ENCODE measurements at regions of chr16 and their contacts with region 1.

Region 1: GRCh38 chr16:56389554-56389953 is 35.8 kb downstream of the AMFR start:
- DNase-seq: no peak
- H3K4me3 ChIP-seq: no peak overlapping the region
- H3K27ac ChIP-seq: no peak overlapping the region
- H3K4me1 ChIP-seq: no peaks in the 10 kb centered on the region
- H3K27me3 ChIP-seq: no peaks in the 10 kb centered on the region
- CTCF ChIP-seq: no peak
- EP300 ChIP-seq: no peak
- POLR2A ChIP-seq: no peak
- RAD21 ChIP-seq: no peak

Region 2: DNA sequence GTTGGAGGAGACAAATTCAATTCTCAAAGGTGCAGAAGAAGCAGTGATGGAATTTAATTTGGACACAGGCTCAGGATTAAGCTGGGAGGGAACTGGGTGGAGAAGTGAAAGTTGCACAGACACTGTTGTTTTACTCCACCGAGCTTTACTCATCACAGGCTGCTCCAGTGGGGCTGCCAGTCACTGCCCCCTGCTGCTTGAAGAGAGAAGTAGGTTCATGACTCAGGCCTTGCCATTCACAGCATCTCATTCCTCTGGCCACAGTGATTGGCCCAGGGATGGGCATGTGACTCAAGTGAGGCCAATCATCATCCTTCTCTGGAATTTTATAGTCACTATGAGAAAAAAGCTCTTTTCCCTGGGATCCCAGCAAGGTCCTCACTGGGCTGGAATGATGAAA is 186.5 kb before region 1 on chr16:
- CTCF ChIA-PET with region 1: no interaction called
- POLR2A ChIA-PET with region 1: no interaction called
- DNase-seq: peak in 1 of 2 experiments; percentile 53
- H3K4me3 ChIP-seq: no peak overlapping the region
- H3K27ac ChIP-seq: no peak overlapping the region
- H3K4me1 ChIP-seq: peaks cover 0 to 4% (median 3%) of the 10 kb centered on the region in 4 experiments; a peak in 4 of 7 replicates
- H3K27me3 ChIP-seq: no peaks in the 10 kb centered on the region
- CTCF ChIP-seq: peak; percentile 44 to 49 (median 48)
- EP300 ChIP-seq: no peak
- POLR2A ChIP-seq: no peak
- RAD21 ChIP-seq: peak; percentile 49 to 64; a peak in 3 of 4 replicates

Region 3: DNA sequence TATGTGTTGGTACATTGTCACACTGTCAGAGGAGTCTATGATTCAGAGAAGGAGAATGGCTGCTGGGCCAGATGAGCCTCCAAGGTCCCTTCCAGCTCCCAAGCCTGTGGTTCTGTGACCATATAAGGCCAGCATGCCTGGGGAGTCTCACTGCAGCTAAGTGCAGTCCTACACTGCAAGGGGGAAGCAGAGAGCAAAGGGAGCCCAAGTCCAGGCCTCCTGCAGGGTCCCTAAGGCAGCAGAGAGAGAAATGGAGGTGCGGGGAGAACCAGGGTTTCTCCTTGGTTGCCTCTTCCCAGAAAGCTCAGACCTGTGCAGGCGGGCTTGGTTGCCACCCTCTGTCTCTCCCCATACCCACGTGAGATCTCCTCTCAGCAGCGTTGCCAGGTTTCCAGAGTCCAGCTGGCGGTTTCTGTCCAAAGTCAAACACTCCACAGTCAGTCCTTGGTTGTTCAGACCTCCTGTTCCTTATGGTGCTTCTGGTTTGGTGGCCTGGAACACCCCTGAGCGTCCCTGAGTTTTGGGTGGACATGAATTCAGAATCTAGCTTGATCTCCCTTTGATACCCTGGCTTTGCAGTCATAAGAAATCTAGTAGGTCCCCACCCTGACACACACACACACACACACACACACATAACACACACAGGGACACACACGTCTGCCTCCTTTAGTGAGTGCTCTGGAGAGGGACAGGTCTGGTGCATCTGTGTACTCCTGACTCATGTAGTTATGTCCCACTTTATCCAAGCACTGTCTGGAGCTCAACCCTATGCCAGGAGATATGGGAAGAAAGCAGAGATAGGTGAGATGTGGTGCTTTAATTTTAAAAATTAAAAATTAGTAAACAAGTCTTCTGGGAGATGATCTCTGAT is 119.5 kb before region 1 on chr16:
- CTCF ChIA-PET with region 1: no interaction called
- POLR2A ChIA-PET with region 1: no interaction called
- DNase-seq: peak in 1 of 2 experiments; percentile 29
- H3K4me3 ChIP-seq: no peak overlapping the region
- H3K27ac ChIP-seq: 0 out of 2 replicates have a peak overlapping the region, but pooled peaks have one; percentile 38
- H3K4me1 ChIP-seq: peaks cover 0 to 9% (median 3%) of the 10 kb centered on the region in 4 experiments; a peak in 4 of 7 replicates
- H3K27me3 ChIP-seq: no peaks in the 10 kb centered on the region
- CTCF ChIP-seq: peak; percentile 36 to 52 (median 41)
- EP300 ChIP-seq: no peak
- POLR2A ChIP-seq: no peak
- RAD21 ChIP-seq: peak; percentile 15 to 38; a peak in 3 of 4 replicates

Region 4: GRCh38 chr16:56401482-56401881 is 11.9 kb after region 1 on chr16:
- CTCF ChIA-PET with region 1: interaction called, 19 read pairs
- POLR2A ChIA-PET with region 1: interaction called, 5 read pairs
- DNase-seq: peak in 1 of 2 experiments; percentile 51
- H3K4me3 ChIP-seq: no peak overlapping the region
- H3K27ac ChIP-seq: no peak overlapping the region
- H3K4me1 ChIP-seq: no peaks in the 10 kb centered on the region
- H3K27me3 ChIP-seq: no peaks in the 10 kb centered on the region
- CTCF ChIP-seq: peak; percentile 31 to 78 (median 77); a peak in 3 of 4 replicates
- EP300 ChIP-seq: no peak
- POLR2A ChIP-seq: no peak
- RAD21 ChIP-seq: peak; percentile 56